Left cardiac atrium (tissue), 4 donors: ENCODE measurements at regions of chr18 and their contacts with region 1.

Region 1: DNA sequence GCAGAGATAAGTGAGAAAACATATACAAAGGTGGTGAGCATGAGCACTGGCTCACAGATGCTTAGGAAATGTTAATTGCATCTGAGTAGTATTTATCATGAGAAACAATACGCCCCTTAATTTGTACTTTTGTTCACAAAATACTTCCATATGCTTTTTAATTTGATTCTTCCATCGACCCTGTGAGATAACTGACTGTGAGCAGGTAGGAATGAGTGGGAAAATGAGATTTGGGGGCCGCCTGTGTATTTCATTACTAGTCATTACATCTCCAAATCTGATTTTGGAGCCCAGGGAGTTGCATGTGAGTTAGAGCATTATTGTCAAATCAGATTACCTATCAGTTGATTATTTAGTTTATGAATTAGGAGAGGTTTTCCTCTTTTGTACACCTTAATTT is 36.7 kb upstream of the NPC1 start:
- DNase-seq: no peak
- ATAC-seq: no peak

Region 2: DNA sequence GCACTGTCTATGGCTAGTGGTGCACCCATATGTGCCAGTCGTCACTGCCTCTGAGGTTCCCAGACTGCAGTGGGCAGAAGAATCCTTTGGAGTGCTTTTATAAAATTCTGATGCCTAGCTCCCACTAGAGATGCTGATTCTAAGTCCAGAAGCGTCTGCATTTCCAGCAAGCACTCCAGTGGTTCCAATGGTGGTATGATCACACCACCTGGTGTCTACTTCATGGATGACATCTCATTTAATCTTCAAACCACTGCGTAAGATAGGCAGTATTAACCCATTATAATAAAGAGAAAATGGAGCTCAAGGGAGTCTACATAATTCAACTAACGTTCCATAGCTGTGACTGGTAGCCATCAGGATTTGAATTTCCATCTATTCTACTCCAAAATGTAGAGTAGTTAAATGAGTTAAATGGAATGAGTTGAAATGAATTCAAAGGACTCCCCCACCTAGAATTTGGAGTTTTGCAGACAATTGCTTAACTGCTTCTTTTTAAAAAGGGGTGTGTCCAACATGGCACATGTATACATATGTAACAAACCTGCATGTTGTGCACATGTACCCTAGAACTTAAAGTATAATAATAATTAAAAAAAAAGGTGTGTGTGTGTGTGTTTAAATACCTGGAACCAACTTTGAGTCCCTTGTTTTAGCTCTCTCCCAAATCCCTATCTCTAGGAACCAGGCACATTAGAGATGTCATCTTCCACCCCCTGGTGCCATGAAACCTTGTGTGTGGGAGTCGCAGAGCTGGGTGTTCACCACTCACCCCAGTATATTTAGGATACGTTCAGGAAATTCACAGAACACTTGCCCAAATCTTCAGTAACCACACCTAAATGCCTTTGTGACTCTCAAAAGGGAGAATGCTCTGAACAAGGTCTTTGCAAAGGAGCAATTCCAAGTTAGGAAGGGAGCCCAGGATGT is 80.3 kb after region 1 on chr18:
- intact Hi-C with region 1: loop called (anchors 2 to 5 kb)
- DNase-seq: no peak
- ATAC-seq: peak; percentile 78 to 91

Region 3: DNA sequence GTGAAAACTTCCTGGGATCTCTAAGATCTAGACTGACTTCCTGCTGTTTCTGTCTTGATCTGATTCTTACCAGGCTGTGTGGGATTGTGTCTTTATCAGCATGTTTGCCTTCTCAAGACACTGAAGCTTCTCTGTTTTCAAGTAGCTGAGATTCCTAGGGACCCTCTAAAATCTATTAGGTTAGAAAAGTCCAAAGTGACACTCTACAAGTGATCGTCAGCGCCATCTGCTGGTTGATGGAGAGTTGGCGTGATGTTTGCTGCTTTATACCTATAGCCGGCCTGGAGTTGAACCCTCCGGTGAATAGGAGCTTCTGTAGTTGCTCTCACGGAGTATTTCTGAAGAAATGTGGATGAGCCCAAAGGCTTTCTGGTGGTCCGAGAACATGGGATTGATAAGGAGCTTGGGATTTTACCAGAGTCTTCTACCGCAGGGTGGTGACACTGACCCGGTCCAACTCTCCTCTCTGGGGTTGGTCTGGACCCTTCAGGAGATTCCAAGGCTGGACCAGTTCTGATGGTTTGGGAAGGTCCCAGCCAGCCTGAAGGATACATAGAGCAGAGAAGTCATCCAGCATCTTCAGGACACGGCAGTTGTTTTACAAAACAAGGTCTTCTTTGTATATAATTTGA is 295.5 kb after region 1 on chr18:
- intact Hi-C with region 1: loop called in 1 of 2 experiments (anchors 5 kb)
- DNase-seq: peak; percentile 79
- ATAC-seq: peak; percentile 71 to 79